ENCODE measurements at regions of chr10 and their contacts with region 1.

Region 1: DNA sequence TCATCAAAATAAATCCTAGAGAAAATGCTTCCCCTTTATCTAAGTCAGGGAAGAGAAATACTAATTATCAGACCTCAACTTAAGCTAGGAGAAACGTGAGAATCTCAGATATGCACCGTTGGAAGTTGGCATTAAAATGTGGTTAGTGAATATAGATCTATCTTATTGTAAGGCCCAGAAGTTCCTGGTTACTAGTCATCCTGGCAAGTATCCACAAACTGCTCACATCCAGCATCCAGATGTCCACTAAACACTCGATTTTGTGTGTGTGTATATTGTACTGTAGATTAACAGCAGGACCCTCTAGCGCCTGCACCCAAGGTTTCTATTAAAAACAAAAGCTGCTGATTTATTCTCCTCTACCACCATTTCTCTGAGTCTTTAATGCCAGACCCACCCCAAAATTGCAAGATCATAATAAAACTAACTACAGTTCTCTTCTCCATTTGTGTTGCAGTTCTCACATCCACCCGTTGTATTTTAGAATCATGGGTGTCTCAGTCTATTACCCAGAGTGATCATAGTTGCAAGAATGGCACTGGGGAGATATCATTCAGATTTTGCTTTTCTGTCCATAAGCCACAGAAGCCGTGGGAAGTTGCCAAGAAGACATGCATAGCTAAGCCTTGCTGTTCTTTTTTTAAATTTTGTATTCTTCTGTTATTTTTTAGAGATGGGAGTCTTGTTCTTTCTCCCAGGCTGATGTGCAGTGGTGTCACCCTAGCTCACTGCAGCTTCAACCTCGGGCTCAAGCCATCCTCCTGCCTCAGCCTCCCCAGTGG is 165.4 kb downstream of the KIAA1217 start:
- DNase-seq: no peak
- ATAC-seq: no peak

Region 2: GRCh38 chr10:24518981-24519597 is 144.8 kb after region 1 on chr10:
- intact Hi-C with region 1: loop called in 1 of 2 experiments (anchors 5 kb)
- DNase-seq: peak; percentile 69
- ATAC-seq: peak; percentile 71 to 73

Region 3: GRCh38 chr10:24652381-24652957 is 278.1 kb after region 1 on chr10:
- intact Hi-C with region 1: no loop called
- DNase-seq: no peak
- ATAC-seq: no peak

Measured in left cardiac atrium (tissue), 4 donors.